Activated CD4-positive, alpha-beta memory T cell treated with anti-CD3 and anti-CD28 coated beads for 36 hours (primary cell): ENCODE measurements at regions of chr4 and their contacts with region 1.

Region 1: DNA sequence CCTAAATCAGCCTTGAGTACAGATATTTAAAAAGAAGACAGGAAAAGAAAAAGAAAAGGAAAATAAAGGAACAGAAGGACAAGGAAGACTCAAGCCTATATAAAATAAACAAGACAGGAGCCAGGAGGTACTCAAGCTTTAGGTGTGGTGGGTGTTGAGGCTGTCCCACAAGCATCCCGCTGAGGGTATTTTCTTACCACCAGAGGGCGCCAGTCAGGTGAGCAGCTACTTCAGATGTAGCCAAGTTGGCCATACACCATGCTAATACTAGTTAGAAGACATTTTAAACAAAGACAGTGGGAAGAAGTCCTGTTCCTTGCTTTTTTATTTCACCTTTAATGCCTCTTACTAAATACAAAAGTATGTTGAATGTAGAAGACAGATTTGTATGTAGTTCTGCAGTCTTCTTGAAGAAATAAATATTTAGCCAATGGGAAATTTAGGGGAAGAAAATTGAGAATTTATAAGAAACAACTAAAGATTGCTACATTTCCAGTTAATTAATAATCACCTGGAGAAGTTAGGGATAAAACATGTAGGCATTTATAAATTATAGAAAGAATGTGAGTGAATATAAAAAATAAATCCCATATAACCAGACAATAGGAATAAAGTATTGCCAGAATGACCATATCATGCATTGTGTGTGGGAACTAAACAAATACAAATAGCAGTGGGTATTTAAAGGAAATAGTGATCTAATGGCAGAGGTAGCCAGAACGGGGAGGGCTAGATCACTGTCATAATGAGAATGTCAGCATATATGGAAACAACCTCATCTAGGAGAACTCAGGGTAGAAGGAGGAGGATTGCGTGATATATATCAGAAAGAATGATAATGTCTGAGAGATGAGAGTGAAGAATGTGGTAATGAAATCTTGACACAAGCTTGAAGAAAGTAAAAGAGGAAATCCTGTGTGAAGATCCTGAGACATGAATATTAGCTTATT is 71.0 kb downstream of the MTHFD2L start:
- DNase-seq: peak; percentile 82
- H3K4me3 Mint-ChIP-seq: no peak overlapping the region
- H3K27ac Mint-ChIP-seq: no peak overlapping the region
- H3K4me1 Mint-ChIP-seq: no peaks in the 10 kb centered on the region
- H3K27me3 Mint-ChIP-seq: no peaks in the 10 kb centered on the region

Region 2: GRCh38 chr4:74189331-74190043 is 39.5 kb before region 1 on chr4:
- CTCF ChIA-PET with region 1: interaction called, 19 read pairs
- POLR2A ChIA-PET with region 1: no interaction called
- intact Hi-C with region 1: no loop called
- DNase-seq: no peak
- H3K4me3 Mint-ChIP-seq: no peak overlapping the region
- H3K27ac Mint-ChIP-seq: no peak overlapping the region
- H3K4me1 Mint-ChIP-seq: no peaks in the 10 kb centered on the region
- H3K27me3 Mint-ChIP-seq: no peaks in the 10 kb centered on the region

Region 3: DNA sequence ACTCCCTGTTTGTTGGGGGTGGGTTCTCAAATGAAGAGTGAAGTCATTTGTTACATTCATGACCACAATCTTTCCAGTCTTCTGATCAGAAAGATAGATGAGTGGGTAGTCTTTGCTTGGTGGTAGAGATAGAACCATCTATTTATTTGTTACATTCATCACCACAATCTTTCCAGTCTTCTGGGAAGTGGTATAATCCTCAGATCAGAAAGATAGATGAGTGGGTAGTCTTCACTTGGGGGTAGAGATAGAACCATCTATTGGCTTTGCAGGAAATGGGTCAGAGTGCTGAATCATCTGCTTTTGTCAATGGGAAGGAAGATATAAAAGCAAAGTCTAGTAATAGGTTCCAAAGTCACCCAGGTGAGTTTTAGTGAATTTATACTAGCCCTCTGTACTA is 15.1 kb after region 1 on chr4:
- CTCF ChIA-PET with region 1: interaction called, 12 read pairs
- POLR2A ChIA-PET with region 1: no interaction called
- intact Hi-C with region 1: no loop called
- DNase-seq: no peak
- H3K4me3 Mint-ChIP-seq: no peak overlapping the region
- H3K27ac Mint-ChIP-seq: no peak overlapping the region
- H3K4me1 Mint-ChIP-seq: peaks cover 5% of the 10 kb centered on the region
- H3K27me3 Mint-ChIP-seq: no peaks in the 10 kb centered on the region

Region 4: GRCh38 chr4:74311696-74312313 is 82.8 kb after region 1 on chr4:
- CTCF ChIA-PET with region 1: interaction called, 19 read pairs
- POLR2A ChIA-PET with region 1: no interaction called
- intact Hi-C with region 1: loop called (anchors 1 kb)
- DNase-seq: no peak
- H3K4me3 Mint-ChIP-seq: no peak overlapping the region
- H3K27ac Mint-ChIP-seq: no peak overlapping the region
- H3K4me1 Mint-ChIP-seq: peaks cover 8% of the 10 kb centered on the region
- H3K27me3 Mint-ChIP-seq: no peaks in the 10 kb centered on the region

Region 5: DNA sequence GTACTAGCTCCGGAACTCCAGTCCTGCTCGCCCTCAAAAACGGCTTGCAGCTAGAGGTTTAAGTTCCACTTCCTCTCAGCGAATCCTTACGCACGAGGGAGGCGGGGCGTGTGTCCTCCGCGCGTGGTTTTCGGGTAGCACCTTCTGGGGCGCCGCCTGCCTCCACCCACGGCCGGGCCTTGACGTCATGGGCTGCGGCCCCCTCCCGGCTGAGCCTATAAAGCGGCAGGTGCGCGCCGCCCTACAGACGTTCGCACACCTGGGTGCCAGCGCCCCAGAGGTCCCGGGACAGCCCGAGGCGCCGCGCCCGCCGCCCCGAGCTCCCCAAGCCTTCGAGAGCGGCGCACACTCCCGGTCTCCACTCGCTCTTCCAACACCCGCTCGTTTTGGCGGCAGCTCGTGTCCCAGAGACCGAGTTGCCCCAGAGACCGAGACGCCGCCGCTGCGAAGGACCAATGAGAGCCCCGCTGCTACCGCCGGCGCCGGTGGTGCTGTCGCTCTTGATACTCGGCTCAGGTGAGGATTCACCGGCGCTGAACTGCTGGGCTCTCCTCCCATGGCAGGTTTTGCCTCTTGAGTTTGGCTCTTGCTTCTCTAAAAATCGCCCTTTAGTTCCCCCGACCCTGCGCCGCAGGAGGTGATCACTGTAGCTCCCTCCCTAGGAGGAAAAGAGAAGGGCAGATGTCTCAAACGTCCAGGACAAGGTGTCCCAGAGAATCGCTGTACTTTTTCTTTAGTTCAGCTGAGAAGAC is 216.1 kb after region 1 on chr4 and contains the start of gene AREG:
- CTCF ChIA-PET with region 1: interaction called, 3 read pairs
- POLR2A ChIA-PET with region 1: no interaction called
- intact Hi-C with region 1: loop called (anchors 5 kb)
- DNase-seq: peak; percentile 91
- H3K4me3 Mint-ChIP-seq: peak within 1 kb of the TSS; percentile 74
- H3K27ac Mint-ChIP-seq: peak within 1 kb of the TSS; percentile 39
- H3K4me1 Mint-ChIP-seq: peaks cover 14% of the 10 kb centered on the region
- H3K27me3 Mint-ChIP-seq: no peaks in the 10 kb centered on the region
- total RNA-seq, gene AREG: 0.36 to 0.74 TPM

Region 6: GRCh38 chr4:74623041-74623440 is 394.1 kb after region 1 on chr4:
- CTCF ChIA-PET with region 1: interaction called, 4 read pairs
- POLR2A ChIA-PET with region 1: no interaction called
- intact Hi-C with region 1: loop called (anchors 2 kb)
- DNase-seq: no peak
- H3K4me3 Mint-ChIP-seq: no peak overlapping the region
- H3K27ac Mint-ChIP-seq: no peak overlapping the region
- H3K4me1 Mint-ChIP-seq: peaks cover 17% of the 10 kb centered on the region
- H3K27me3 Mint-ChIP-seq: no peaks in the 10 kb centered on the region

Region 7: DNA sequence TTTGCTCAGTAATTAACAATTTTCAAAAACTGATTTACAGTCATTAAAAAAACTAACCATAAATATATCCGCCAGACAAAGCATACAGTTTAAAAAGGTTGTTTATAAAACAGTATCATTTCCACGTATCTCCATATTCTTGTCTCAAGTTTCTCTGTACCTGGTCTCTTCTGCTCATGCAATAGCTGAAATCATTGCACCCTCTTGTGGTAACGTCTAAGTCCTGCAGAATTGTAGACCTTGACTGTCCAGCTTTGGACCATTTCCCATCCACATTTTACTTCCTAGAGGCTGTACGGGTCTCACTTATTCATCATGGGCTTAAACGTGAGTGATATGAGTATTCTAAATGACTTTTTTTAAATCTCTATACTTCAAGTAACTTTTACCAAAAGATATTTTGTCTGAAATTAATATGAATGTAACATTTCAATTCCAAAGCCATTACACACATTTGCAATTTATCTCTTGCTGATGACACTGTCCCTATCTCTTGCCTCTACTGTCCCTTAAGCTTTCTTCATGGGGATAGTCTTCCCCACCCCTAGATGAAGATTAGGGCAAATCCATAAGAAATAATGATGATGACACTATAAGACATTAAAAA is 446.8 kb after region 1 on chr4:
- CTCF ChIA-PET with region 1: interaction called, 19 read pairs
- POLR2A ChIA-PET with region 1: no interaction called
- intact Hi-C with region 1: loop called (anchors 1 kb)
- DNase-seq: no peak
- H3K4me3 Mint-ChIP-seq: no peak overlapping the region
- H3K27ac Mint-ChIP-seq: no peak overlapping the region
- H3K4me1 Mint-ChIP-seq: no peaks in the 10 kb centered on the region
- H3K27me3 Mint-ChIP-seq: peaks cover 3% of the 10 kb centered on the region